Breast epithelium (tissue), 4 donors: ENCODE measurements at regions of chr2 and their contacts with region 1.

Region 1: GRCh38 chr2:230830428-230830827 is 34.3 kb upstream of the ITM2C start:
- DNase-seq: no peak
- H3K4me3 ChIP-seq: no peak overlapping the region
- H3K27ac ChIP-seq: no peak overlapping the region
- H3K4me1 ChIP-seq: no peaks in the 10 kb centered on the region
- H3K27me3 ChIP-seq: peaks cover 0 to 30% of the 10 kb centered on the region in 2 donors
- CTCF ChIP-seq: no peak
- POLR2A ChIP-seq: no peak

Region 2: GRCh38 chr2:230991598-230991997 is 161.2 kb after region 1 on chr2:
- intact Hi-C with region 1: loop called (anchors 5 kb)
- DNase-seq: no peak
- H3K4me3 ChIP-seq: no peak overlapping the region
- H3K27ac ChIP-seq: no peak overlapping the region
- H3K4me1 ChIP-seq: no peaks in the 10 kb centered on the region
- H3K27me3 ChIP-seq: peaks cover 0 to 35% of the 10 kb centered on the region in 2 donors
- CTCF ChIP-seq: no peak
- POLR2A ChIP-seq: no peak